Activated naive CD4-positive, alpha-beta T cell treated with anti-CD3 and anti-CD28 coated beads for 36 hours (primary cell): ENCODE measurements at regions of chr15 and their contacts with region 1.

Region 1: DNA sequence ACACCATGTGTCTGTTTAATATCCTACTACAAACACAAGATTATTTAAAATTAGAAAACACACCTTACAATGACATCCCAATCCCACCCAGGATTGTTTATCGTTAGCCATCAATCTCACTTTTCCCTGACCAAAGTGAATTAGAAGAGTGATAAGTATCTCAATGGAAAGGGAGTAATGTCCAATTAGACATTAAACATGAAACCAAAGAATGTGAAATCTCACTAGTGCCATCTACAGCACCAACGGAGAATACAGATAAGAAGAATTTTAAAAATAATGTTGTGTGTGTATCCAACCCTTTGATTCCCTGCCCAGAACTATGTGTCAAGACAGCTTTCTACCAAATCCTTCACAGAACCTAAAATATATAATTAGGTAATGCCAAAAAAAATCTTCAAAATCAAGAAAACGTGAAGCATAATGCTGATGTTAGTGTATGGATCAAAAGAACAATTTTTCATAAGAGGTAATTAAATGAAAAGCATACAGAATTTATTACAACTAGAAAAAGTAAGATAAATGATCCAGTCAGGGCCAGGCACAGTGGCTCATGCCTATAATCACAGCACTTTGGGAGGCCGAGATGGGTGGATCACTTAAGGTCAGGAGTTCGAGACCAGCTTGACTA is 64.2 kb downstream of the SCAPER start:
- DNase-seq: no peak
- H3K4me3 Mint-ChIP-seq: no peak overlapping the region
- H3K27ac Mint-ChIP-seq: no peak overlapping the region
- H3K4me1 Mint-ChIP-seq: peaks cover 18% of the 10 kb centered on the region
- H3K27me3 Mint-ChIP-seq: no peaks in the 10 kb centered on the region

Region 2: GRCh38 chr15:76190834-76191538 is 650.0 kb before region 1 on chr15:
- CTCF ChIA-PET with region 1: interaction called, 3 read pairs
- intact Hi-C with region 1: loop called (anchors 2 kb)
- DNase-seq: peak; percentile 83
- H3K4me3 Mint-ChIP-seq: no peak overlapping the region
- H3K27ac Mint-ChIP-seq: no peak overlapping the region
- H3K4me1 Mint-ChIP-seq: peaks cover 13% of the 10 kb centered on the region
- H3K27me3 Mint-ChIP-seq: peaks cover 56% of the 10 kb centered on the region

Region 3: GRCh38 chr15:76235186-76235826 is 605.6 kb before region 1 on chr15:
- CTCF ChIA-PET with region 1: no interaction called
- intact Hi-C with region 1: loop called (anchors 2 kb)
- DNase-seq: no peak
- H3K4me3 Mint-ChIP-seq: no peak overlapping the region
- H3K27ac Mint-ChIP-seq: no peak overlapping the region
- H3K4me1 Mint-ChIP-seq: no peaks in the 10 kb centered on the region
- H3K27me3 Mint-ChIP-seq: no peaks in the 10 kb centered on the region

Region 4: DNA sequence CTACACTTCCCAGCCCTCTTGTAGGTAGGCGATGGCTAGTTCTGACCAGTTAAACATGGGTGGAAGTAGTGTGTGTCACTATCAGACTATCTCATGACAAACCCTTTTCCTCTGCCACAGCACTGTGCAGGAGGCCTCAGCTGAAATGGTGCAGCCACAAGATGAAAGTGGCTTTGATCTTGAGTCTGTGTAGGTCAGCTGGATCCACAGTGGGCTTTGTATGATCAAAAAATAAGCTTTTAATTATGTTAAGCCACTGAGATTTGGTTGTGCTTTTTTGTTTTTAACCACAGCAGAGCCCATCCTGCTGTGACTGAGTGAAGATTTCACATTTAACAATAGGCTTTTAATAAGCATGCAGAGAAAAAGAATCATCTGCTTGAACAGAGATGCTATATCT is 110.3 kb after region 1 on chr15:
- CTCF ChIA-PET with region 1: no interaction called
- intact Hi-C with region 1: no loop called
- DNase-seq: no peak
- H3K4me3 Mint-ChIP-seq: no peak overlapping the region
- H3K27ac Mint-ChIP-seq: no peak overlapping the region
- H3K4me1 Mint-ChIP-seq: peaks cover 7% of the 10 kb centered on the region
- H3K27me3 Mint-ChIP-seq: no peaks in the 10 kb centered on the region